ENCODE measurements at regions of chr3 and their contacts with region 1.

Region 1: GRCh38 chr3:143119009-143119914 is at the start of gene CHST2:
- DNase-seq: peak; percentile 62
- H3K4me3 Mint-ChIP-seq: peak within 1 kb of the TSS; percentile 92
- H3K27ac Mint-ChIP-seq: peak within 1 kb of the TSS; percentile 74
- H3K4me1 Mint-ChIP-seq: peaks cover 35% of the 10 kb centered on the region
- H3K27me3 Mint-ChIP-seq: peaks cover 10% of the 10 kb centered on the region
- total RNA-seq, gene CHST2: 11.3 and 11.4 TPM in 2 replicates

Region 2: DNA sequence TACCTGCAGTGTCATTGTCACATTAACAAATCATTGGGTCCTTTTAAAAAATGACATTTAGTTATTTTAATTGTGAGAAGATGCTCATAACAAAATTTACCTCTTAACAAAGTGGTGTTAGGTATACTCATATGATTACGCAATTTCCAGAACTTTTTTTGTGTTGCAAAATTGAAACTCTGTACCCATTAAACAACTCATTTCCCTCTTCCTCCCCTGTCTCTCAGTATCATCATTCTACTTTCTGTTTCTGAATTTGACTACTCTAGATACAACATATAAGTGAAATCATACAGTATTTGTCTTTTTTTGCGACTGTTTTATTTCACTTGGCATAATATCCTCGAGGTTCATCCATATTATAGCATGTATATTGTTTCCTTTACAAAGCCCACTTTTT is 58.4 kb before region 1 on chr3:
- intact Hi-C with region 1: loop called (anchors 1 kb)
- DNase-seq: no peak
- H3K4me3 Mint-ChIP-seq: no peak overlapping the region
- H3K27ac Mint-ChIP-seq: peak overlapping the region; percentile 66
- H3K4me1 Mint-ChIP-seq: peaks cover 22% of the 10 kb centered on the region
- H3K27me3 Mint-ChIP-seq: no peaks in the 10 kb centered on the region

Region 3: DNA sequence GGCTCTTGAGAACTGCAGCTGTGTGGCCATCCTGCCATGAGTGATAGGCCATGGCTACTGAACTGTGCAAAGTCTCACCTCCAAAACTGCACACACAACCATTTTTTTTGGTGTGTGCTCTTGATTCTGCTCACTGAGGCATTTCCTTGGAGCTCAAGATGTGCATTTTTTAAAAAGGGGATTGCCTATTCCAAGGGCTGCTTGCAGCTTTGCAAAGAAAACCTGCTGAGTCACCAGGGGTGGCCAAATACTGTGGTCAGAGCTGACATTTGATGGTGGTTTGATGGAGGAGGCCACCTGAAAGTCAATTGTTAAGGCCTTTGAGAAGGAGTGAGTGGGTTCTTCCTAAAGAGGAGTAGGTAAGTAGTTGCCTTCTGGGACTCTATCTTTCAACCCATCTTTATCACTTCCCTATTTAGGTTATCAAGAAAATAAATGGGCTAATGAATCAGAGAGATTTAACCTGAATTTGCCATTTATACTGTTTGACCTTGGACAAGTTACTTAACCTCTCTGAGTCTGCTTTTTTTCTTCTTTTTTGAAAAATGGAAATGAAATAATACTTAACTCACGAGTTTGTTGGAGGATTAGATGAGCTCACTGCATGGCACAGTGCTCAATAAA is 88.2 kb after region 1 on chr3:
- intact Hi-C with region 1: loop called (anchors 5 kb)
- DNase-seq: peak; percentile 6
- H3K4me3 Mint-ChIP-seq: no peak overlapping the region
- H3K27ac Mint-ChIP-seq: peak overlapping the region; percentile 66
- H3K4me1 Mint-ChIP-seq: peaks cover 18% of the 10 kb centered on the region
- H3K27me3 Mint-ChIP-seq: no peaks in the 10 kb centered on the region

Region 4: DNA sequence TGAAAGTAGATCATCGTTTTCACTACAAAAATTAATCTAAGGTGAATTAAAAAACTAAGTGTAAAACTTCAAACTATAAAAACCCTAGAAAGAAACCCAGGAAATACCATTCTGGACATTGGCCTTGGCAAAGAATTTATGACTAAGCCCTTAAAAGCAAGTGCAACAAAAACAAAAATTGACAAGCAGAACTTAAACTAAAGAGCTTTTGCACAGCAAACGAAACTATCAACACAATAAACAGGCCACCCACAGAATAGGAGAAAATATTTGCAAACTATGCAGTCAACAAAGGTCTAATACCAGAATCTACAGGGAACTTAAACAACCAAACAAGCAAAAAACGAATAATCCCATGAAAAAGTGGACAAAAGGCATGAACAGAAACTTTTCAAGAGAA is 302.3 kb after region 1 on chr3:
- intact Hi-C with region 1: loop called (anchors 5 kb)
- DNase-seq: no peak
- H3K4me3 Mint-ChIP-seq: no peak overlapping the region
- H3K27ac Mint-ChIP-seq: no peak overlapping the region
- H3K4me1 Mint-ChIP-seq: peaks cover 5% of the 10 kb centered on the region
- H3K27me3 Mint-ChIP-seq: peaks cover 11% of the 10 kb centered on the region

Region 5: DNA sequence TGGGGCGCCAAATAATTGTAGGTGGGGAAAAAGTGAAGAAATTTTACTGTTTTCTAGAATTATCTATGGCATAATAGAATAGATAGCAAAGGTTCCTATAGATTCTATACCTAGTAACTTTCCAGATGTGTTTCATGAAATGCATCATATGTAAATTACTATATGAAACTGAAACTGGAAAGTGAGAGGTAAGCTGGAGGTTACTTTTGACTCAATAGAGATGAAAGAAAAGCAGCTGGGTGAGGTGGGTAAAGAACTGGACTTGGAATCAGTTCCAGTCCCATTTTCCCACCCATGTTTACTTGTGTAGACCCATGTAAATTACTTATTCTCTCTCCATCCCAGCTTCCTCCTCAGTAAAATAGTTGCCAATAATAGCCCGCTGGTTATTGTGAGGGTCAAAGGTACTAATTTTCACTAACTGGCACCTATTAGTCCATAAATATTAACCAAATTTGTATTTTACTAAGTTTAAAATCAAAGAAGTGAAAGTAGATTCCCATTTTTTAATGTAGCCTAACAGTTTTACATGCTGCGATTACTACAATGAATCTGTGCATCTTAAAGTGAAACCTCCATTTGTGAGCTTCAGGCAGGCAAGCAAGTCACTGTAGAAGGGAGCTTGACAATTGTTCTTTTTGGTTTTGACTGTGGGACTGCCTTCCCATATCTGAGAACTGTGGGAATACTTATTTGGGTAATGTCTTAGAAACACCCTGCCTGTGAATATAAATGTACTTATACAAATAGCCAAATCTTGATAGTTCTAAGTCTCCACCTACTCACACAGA is 416.9 kb after region 1 on chr3:
- intact Hi-C with region 1: loop called (anchors 2 kb)
- DNase-seq: no peak
- H3K4me3 Mint-ChIP-seq: no peak overlapping the region
- H3K27ac Mint-ChIP-seq: no peak overlapping the region
- H3K4me1 Mint-ChIP-seq: peaks cover 14% of the 10 kb centered on the region
- H3K27me3 Mint-ChIP-seq: peaks cover 2% of the 10 kb centered on the region

Region 6: DNA sequence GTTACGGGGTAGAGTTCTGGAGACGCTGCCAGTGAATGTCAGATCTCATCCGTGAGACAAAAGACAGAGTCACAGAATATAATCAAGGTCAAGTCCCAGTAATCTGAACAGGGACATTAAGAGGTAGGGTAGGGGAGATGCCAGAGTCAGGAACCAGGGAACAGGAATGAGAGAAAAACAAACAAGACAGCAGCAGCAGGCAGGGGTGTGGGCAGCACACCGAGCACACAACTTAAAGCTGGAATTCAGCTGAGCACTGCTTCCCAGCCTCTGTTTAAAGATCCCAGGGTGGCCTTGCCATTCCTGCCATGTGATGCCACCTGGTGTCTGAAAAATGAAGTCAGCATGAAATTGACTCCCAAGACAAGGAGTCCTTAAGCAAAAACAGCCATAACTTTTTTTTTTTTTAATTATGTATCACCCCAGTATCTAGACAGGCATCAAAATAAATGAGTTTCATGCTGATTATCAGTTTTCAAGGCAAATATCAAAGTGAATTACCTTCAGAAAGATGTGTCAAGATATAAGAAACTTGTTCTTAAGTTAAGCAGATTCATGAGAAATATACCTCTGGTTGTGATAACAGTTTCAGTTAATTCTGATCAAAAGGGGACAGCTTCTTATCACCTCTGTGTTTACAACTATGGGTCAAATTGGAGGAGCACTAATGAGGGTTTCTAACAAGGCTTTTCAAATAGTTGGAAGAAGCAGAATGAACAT is 525.3 kb after region 1 on chr3:
- intact Hi-C with region 1: loop called (anchors 1 kb)
- DNase-seq: no peak
- H3K4me3 Mint-ChIP-seq: no peak overlapping the region
- H3K27ac Mint-ChIP-seq: no peak overlapping the region
- H3K4me1 Mint-ChIP-seq: no peaks in the 10 kb centered on the region
- H3K27me3 Mint-ChIP-seq: no peaks in the 10 kb centered on the region

Region 7: GRCh38 chr3:143795874-143796273 is 676.6 kb after region 1 on chr3:
- intact Hi-C with region 1: no loop called
- DNase-seq: no peak
- H3K4me3 Mint-ChIP-seq: no peak overlapping the region
- H3K27ac Mint-ChIP-seq: no peak overlapping the region
- H3K4me1 Mint-ChIP-seq: no peaks in the 10 kb centered on the region
- H3K27me3 Mint-ChIP-seq: peaks cover 7% of the 10 kb centered on the region

Measured in activated T-helper 1 cell treated with anti-CD3 and anti-CD28 coated beads, Interleukin-12 subunit alpha, Interleukin-12 subunit beta, Interleukin-2, Interleukin-4 antibody, amounts not matched to agents 30 ng/mL and 10 ng/mL and 1 ng/mL, durations not matched to agents 14 hours and 24 hours and 36 hours (primary cell).